GM18951 (cell line): ENCODE measurements at regions of chr1 and their contacts with region 1.

Region 1: DNA sequence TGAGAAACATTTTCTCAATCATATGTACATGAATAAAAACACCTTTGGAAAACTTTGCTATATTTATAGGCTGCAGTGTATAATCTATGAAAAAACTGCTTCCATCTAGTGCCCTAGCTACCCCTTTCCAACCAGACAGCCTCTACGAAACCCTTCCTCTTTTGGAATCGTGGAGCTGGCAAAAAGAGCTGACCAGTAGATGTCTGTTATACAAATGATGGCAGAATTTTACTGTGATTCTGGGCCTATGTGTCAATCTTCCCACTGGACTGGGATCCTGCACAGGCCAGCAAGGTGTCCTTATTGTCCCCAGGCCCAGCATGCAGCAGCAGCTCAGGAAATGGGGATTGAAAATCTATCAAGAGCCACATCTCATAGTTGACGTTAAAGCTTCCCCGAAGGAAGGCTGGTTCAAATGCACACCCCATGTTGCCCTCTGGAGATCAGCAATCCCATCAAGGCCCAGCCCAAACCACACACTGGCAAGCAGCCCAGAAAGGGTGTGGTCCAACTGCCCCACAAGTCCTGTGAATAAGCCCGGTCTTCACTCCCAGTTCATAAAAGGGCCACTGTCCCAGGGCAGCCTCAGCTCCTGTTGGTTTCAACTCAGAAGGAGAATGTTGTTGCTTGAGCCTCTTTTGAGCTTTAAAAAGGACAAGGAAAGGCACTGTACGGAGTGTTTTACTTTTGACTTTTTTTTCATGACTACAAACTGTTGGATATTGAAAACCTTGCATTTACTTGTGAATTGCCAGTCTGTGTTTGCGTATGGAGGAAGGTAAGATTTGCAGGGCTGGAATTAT is 8.7 kb upstream of the FAM20B start:
- POLR2A ChIP-seq: no peak

Region 2: GRCh38 chr1:178774263-178774662 is 242.7 kb before region 1 on chr1:
- in situ Hi-C with region 1: loop called (anchors 10 kb)
- POLR2A ChIP-seq: no peak

Region 3: GRCh38 chr1:178796013-178796412 is 220.9 kb before region 1 on chr1:
- in situ Hi-C with region 1: no loop called
- POLR2A ChIP-seq: no peak